ENCODE measurements at regions of chrX and their contacts with region 1.

Region 1: GRCh38 chrX:17242470-17242869 is 132.5 kb upstream of the NHS start:
- DNase-seq: no peak
- ATAC-seq: peak in 1 of 2 donors; percentile 50
- H3K4me3 ChIP-seq: no peak overlapping the region
- H3K27ac ChIP-seq: no peak overlapping the region
- H3K4me1 ChIP-seq: no peaks in the 10 kb centered on the region
- H3K27me3 ChIP-seq: no peaks in the 10 kb centered on the region

Region 2: GRCh38 chrX:17590892-17591740 is 348.6 kb after region 1 on chrX:
- intact Hi-C with region 1: loop called in 2 of 4 experiments (anchors 10 kb)
- DNase-seq: peak; percentile 44 to 75 (median 70)
- ATAC-seq: peak; percentile 88 to 90
- H3K4me3 ChIP-seq: no peak overlapping the region
- H3K27ac ChIP-seq: no peak overlapping the region
- H3K4me1 ChIP-seq: peaks cover 3% of the 10 kb centered on the region
- H3K27me3 ChIP-seq: no peaks in the 10 kb centered on the region

Region 3: DNA sequence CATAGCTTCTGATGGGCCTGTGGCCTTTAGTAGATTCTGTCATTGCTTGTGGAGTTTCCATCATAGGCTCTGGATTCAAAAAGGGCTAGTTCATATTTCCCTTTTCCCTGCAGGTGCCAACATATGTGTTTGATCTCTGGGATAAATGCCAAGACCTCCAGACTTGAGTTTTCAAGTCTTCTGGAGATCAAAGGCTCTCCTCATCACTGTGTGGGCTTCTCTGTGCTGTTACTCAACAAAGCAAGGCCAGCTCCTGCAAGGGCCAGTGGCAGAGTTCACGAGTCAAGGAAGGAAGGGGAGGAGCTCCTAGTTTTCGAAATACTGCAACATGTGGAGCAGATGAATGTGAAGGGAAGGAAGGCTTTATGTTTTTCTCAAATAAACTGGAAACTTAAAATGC is 432.1 kb after region 1 on chrX:
- intact Hi-C with region 1: loop called in 1 of 4 experiments (anchors 10 kb)
- DNase-seq: no peak
- ATAC-seq: no peak
- H3K4me3 ChIP-seq: no peak overlapping the region
- H3K27ac ChIP-seq: no peak overlapping the region
- H3K4me1 ChIP-seq: no peaks in the 10 kb centered on the region
- H3K27me3 ChIP-seq: no peaks in the 10 kb centered on the region

Region 4: DNA sequence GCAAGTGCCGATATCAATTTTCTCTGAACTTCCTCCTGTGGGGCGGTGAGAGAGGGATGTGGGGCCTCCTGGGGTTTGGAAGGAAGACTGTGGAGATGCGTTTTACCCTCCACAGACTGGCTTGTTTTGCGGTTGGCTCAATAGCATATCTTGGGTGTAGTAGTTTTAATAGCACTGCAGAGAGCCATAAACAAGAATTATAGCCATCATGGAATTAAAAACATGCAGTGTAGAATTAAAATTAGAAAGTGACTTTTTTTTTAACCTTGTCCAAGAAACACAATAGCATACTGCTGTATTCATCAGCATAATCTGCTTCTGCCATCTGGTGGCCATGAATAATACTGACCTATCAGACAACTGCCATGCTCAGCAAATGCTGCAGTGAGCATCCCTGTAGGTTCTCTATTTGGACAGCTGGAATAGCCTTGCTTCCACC is 447.5 kb after region 1 on chrX:
- intact Hi-C with region 1: loop called in 2 of 4 experiments (anchors 2 to 5 kb)
- DNase-seq: no peak
- ATAC-seq: peak; percentile 59 to 84
- H3K4me3 ChIP-seq: no peak overlapping the region
- H3K27ac ChIP-seq: no peak overlapping the region
- H3K4me1 ChIP-seq: no peaks in the 10 kb centered on the region
- H3K27me3 ChIP-seq: no peaks in the 10 kb centered on the region

Measured in right cardiac atrium (tissue), 5 donors.